Heart right ventricle (tissue), 16 donors: ENCODE measurements at regions of chr19 and their contacts with region 1.

Region 1: DNA sequence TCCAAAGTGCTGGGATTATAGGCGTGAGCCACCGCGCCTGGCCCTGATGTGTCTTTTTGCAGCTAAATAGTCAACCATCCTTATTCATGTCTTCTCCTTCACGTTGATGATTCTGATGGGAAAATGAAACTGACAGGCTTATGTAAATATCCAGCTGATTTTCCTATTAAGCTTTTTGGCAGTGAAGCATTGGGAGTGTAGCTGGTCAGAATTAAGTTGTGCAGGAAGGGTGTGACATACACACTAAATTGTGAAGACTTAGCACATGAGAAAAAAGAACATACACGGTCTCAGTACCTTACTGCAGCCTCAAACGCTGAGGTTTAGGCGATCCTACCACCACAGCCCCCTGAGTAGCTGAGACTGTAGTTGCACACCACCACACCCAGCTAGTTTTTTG is 50.5 kb upstream of the USE1 start:
- DNase-seq: no peak
- ATAC-seq: peak in 6 of 8 donors; percentile 17 to 64 (median 52)
- H3K4me3 ChIP-seq: no peak overlapping the region
- H3K27ac ChIP-seq: peak overlapping the region in 6 of 10 donors; percentile 7 to 51 (median 38)
- H3K4me1 ChIP-seq: no peaks in the 10 kb centered on the region
- H3K27me3 ChIP-seq: no peaks in the 10 kb centered on the region
- CTCF ChIP-seq: no peak

Region 2: DNA sequence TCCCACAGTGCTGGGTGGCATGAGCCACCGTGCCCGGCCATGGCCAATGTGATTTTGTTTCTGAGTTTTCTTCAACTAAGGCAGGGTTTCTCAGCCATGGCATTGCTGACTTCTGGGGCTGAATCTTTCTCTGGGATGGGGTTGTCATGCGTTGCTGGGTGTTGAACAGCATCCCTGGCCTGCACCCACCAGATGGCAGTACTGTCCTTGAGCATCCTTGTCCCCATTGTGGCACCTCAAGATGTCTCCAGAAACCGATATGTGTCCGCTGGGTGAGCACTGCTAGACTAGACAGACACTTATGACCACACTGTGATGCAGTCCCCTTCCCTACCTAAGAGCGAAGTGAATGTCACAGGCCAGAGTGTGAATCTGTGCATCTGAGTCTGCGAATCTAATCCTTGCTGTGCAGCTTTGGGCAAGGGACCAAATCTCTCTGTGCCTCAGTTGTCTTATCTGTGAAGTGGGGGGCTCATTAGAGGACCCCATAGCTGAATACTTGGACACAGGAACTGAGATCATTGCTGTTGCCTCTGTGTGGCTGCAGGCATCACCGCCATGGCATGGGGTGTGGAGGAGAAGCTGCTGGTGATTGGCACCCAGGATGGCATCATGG is 385.7 kb before region 1 on chr19:
- intact Hi-C with region 1: loop called in 1 of 10 experiments (anchors 5 kb)
- DNase-seq: peak; percentile 20 to 33
- ATAC-seq: peak in 2 of 8 donors; percentile 59 to 72
- H3K4me3 ChIP-seq: no peak overlapping the region
- H3K27ac ChIP-seq: no peak overlapping the region
- H3K4me1 ChIP-seq: no peaks in the 10 kb centered on the region
- H3K27me3 ChIP-seq: peaks cover 0 to 17% (median 0%) of the 10 kb centered on the region in 7 donors
- CTCF ChIP-seq: peak; percentile 12 to 64 (median 44)